Heart left ventricle (tissue), 16 donors: ENCODE measurements at regions of chr7 and their contacts with region 1.

Region 1: GRCh38 chr7:23254051-23254681 is 7.6 kb downstream of the GPNMB start:
- DNase-seq: no peak
- ATAC-seq: no peak
- H3K4me3 ChIP-seq: no peak overlapping the region
- H3K27ac ChIP-seq: no peak overlapping the region
- H3K4me1 ChIP-seq: peaks cover 0 to 5% (median 0%) of the 10 kb centered on the region in 12 donors
- H3K27me3 ChIP-seq: no peaks in the 10 kb centered on the region
- CTCF ChIP-seq: no peak
- POLR2A ChIP-seq: no peak

Region 2: GRCh38 chr7:23191021-23191420 is 63.1 kb before region 1 on chr7:
- intact Hi-C with region 1: loop called in 8 of 10 experiments (anchors 5 kb)
- DNase-seq: no peak
- ATAC-seq: peak in 1 of 4 donors; percentile 45
- H3K4me3 ChIP-seq: no peak overlapping the region
- H3K27ac ChIP-seq: peak overlapping the region in 1 of 12 donors; percentile 23
- H3K4me1 ChIP-seq: peaks cover 0 to 16% (median 2%) of the 10 kb centered on the region in 12 donors
- H3K27me3 ChIP-seq: no peaks in the 10 kb centered on the region
- CTCF ChIP-seq: no peak
- POLR2A ChIP-seq: no peak

Region 3: DNA sequence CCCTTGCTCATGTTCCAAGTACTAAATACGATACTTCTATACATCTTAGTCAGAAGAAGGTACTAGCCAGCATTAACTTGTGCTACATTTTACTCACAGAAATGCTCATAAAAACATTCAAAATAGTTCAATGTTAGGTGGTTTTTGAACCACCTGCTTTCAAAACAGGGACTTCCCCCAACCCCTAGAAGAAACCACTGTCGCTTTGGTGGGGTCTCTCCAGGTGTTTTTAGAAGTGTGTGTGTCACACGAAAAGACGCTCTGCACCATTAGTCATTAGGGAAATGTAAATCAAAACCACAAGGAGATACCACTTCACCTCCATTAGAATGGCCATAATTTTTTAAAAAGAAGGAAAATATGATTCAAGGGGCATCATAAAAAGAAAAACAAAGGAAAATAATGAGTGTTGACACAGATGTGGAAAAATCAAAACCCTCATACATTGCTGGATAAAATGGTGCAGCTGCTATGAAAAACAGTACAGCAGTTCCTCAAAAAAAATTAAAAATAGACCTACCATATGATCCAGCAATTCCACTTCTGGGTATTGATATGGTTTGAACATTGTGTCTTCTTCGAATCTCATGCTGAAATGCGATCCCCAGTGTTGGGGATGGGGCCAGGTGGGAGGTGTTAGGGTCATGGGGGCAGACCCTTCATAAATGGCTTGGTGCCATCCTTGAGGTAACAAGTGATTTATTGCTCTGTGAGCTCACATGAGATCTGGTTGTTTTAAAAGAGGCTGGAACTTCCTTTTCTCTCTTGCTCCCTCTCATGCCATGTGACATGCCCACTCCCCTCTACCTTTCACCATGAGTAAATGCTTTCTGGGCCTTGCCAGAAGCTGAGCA is 119.2 kb after region 1 on chr7:
- intact Hi-C with region 1: no loop called
- DNase-seq: no peak
- ATAC-seq: no peak
- H3K4me3 ChIP-seq: no peak overlapping the region
- H3K27ac ChIP-seq: no peak overlapping the region
- H3K4me1 ChIP-seq: peaks cover 0 to 10% (median 0%) of the 10 kb centered on the region in 12 donors
- H3K27me3 ChIP-seq: no peaks in the 10 kb centered on the region
- CTCF ChIP-seq: no peak
- POLR2A ChIP-seq: no peak